ENCODE measurements at regions of chr5 and their contacts with region 1.

Region 1: GRCh38 chr5:59483971-59484472 is 409.5 kb downstream of the PDE4D start:
- DNase-seq: peak; percentile 17
- ATAC-seq: peak; percentile 83
- H3K4me3 Mint-ChIP-seq: peak overlapping the region; percentile 1
- H3K27ac Mint-ChIP-seq: peak overlapping the region; percentile 75
- H3K4me1 Mint-ChIP-seq: peaks cover 24% of the 10 kb centered on the region
- H3K27me3 Mint-ChIP-seq: peaks cover 7% of the 10 kb centered on the region

Region 2: GRCh38 chr5:59099270-59099994 is 384.6 kb before region 1 on chr5:
- CTCF ChIA-PET with region 1: no interaction called
- POLR2A ChIA-PET with region 1: no interaction called
- intact Hi-C with region 1: no loop called
- DNase-seq: peak; percentile 64
- ATAC-seq: peak; percentile 96
- H3K4me3 Mint-ChIP-seq: peak overlapping the region; percentile 17
- H3K27ac Mint-ChIP-seq: peak overlapping the region; percentile 79
- H3K4me1 Mint-ChIP-seq: peaks cover 45% of the 10 kb centered on the region
- H3K27me3 Mint-ChIP-seq: peaks cover 2% of the 10 kb centered on the region

Region 3: GRCh38 chr5:59238126-59238902 is 245.7 kb before region 1 on chr5:
- CTCF ChIA-PET with region 1: no interaction called
- POLR2A ChIA-PET with region 1: no interaction called
- intact Hi-C with region 1: loop called in 1 of 2 experiments (anchors 1 kb)
- DNase-seq: peak; percentile 20
- ATAC-seq: peak; percentile 96
- H3K4me3 Mint-ChIP-seq: no peak overlapping the region
- H3K27ac Mint-ChIP-seq: no peak overlapping the region
- H3K4me1 Mint-ChIP-seq: peaks cover 22% of the 10 kb centered on the region
- H3K27me3 Mint-ChIP-seq: peaks cover 45% of the 10 kb centered on the region

Region 4: GRCh38 chr5:59587489-59588337 is 103.7 kb after region 1 on chr5:
- CTCF ChIA-PET with region 1: no interaction called
- POLR2A ChIA-PET with region 1: no interaction called
- intact Hi-C with region 1: loop called in 1 of 2 experiments (anchors 1 kb)
- DNase-seq: peak; percentile 15
- ATAC-seq: no peak
- H3K4me3 Mint-ChIP-seq: no peak overlapping the region
- H3K27ac Mint-ChIP-seq: no peak overlapping the region
- H3K4me1 Mint-ChIP-seq: peaks cover 9% of the 10 kb centered on the region
- H3K27me3 Mint-ChIP-seq: peaks cover 21% of the 10 kb centered on the region

Region 5: DNA sequence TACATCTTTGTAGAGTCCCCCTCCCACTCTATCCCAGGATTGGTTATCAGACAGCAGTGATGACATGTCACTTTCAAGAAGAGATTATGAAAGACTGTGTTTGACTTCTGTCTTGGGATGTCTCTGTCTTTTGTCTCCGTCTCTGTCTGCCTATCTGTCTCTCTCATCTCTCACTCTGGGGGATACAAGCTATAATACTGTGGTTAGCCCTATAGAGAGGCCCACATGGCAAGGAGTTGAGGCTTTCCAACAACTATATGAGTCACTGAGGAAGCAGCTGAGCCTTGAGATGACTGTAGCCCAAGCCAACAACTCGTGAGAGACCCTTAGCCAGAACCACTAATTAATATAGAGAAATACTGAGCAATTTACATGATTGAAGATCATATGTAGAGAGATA is 124.7 kb after region 1 on chr5:
- CTCF ChIA-PET with region 1: no interaction called
- POLR2A ChIA-PET with region 1: no interaction called
- intact Hi-C with region 1: loop called in 1 of 2 experiments (anchors 1 kb)
- DNase-seq: peak; percentile 28
- ATAC-seq: peak; percentile 58
- H3K4me3 Mint-ChIP-seq: no peak overlapping the region
- H3K27ac Mint-ChIP-seq: no peak overlapping the region
- H3K4me1 Mint-ChIP-seq: peaks cover 18% of the 10 kb centered on the region
- H3K27me3 Mint-ChIP-seq: peaks cover 22% of the 10 kb centered on the region

Region 6: DNA sequence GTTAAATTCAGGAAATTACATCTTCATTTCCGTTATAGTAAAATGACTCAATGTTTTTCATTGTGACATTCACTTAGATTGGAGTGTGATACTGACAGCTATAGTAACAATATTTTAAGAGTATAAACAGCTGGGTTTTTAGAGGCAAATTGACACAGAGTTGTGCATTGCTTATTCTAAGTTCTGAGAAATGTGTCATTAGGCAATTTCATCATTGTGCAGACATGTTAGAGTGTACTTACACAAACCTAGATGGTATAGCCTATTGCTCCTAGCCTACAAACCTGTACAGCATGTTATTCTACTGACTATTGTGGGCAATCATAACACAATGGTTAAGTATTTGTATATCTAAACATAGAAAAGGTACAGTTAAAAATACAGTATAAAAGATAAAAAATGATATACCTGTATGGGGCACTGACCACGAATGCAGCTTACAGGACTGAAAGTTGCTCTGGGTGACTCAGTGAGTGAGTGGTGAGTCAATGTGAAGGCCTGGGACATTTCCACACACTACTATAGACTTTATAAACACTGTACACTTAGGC is 276.9 kb after region 1 on chr5:
- CTCF ChIA-PET with region 1: no interaction called
- POLR2A ChIA-PET with region 1: no interaction called
- intact Hi-C with region 1: loop called in 1 of 2 experiments (anchors 2 kb)
- DNase-seq: peak; percentile 62
- ATAC-seq: peak; percentile 95
- H3K4me3 Mint-ChIP-seq: no peak overlapping the region
- H3K27ac Mint-ChIP-seq: no peak overlapping the region
- H3K4me1 Mint-ChIP-seq: no peaks in the 10 kb centered on the region
- H3K27me3 Mint-ChIP-seq: peaks cover 2% of the 10 kb centered on the region

Measured in activated CD4-positive, alpha-beta T cell treated with anti-CD3 and anti-CD28 coated beads for 36 hours (primary cell).